CD8-positive, alpha-beta T cell (primary cell): ENCODE measurements at regions of chr3 and their contacts with region 1.

Region 1: GRCh38 chr3:57169872-57170623 is 4.9 kb upstream of the IL17RD start:
- DNase-seq: peak; percentile 22 to 77 (median 62)
- ATAC-seq: peak; percentile 78
- H3K4me3 ChIP-seq: peak overlapping the region; percentile 39 to 54
- H3K4me3 Mint-ChIP-seq: peak overlapping the region; percentile 46
- H3K27ac ChIP-seq: no peak overlapping the region
- H3K27ac Mint-ChIP-seq: no peak overlapping the region
- H3K4me1 ChIP-seq: peaks cover 6% of the 10 kb centered on the region
- H3K4me1 Mint-ChIP-seq: peaks cover 10% of the 10 kb centered on the region
- H3K27me3 ChIP-seq: peaks cover 6 to 7% of the 10 kb centered on the region in 2 experiments
- H3K27me3 Mint-ChIP-seq: peaks cover 48% of the 10 kb centered on the region
- CTCF ChIP-seq: peak; percentile 85

Region 2: GRCh38 chr3:57141719-57142410 is 28.2 kb before region 1 on chr3:
- CTCF ChIA-PET with region 1: interaction called, 10 read pairs
- POLR2A ChIA-PET with region 1: no interaction called
- intact Hi-C with region 1: no loop called
- DNase-seq: no peak
- ATAC-seq: no peak
- H3K4me3 ChIP-seq: no peak overlapping the region
- H3K4me3 Mint-ChIP-seq: no peak overlapping the region
- H3K27ac ChIP-seq: no peak overlapping the region
- H3K27ac Mint-ChIP-seq: no peak overlapping the region
- H3K4me1 ChIP-seq: no peaks in the 10 kb centered on the region
- H3K4me1 Mint-ChIP-seq: no peaks in the 10 kb centered on the region
- H3K27me3 ChIP-seq: no peaks in the 10 kb centered on the region
- H3K27me3 Mint-ChIP-seq: peaks cover 26% of the 10 kb centered on the region
- CTCF ChIP-seq: no peak

Region 3: GRCh38 chr3:57227204-57227929 is 57.3 kb after region 1 on chr3 and contains the start of gene APPL1:
- CTCF ChIA-PET with region 1: interaction called, 3 read pairs
- POLR2A ChIA-PET with region 1: no interaction called
- intact Hi-C with region 1: loop called in 1 of 2 experiments (anchors 1 kb)
- DNase-seq: peak; percentile 68 to 93 (median 87)
- ATAC-seq: peak; percentile 89
- H3K4me3 ChIP-seq: peak within 1 kb of the TSS; percentile 82 to 91
- H3K4me3 Mint-ChIP-seq: peak within 1 kb of the TSS; percentile 93
- H3K27ac ChIP-seq: peak within 1 kb of the TSS; percentile 48 to 68
- H3K27ac Mint-ChIP-seq: peak within 1 kb of the TSS; percentile 89
- H3K4me1 ChIP-seq: peaks cover 11% of the 10 kb centered on the region
- H3K4me1 Mint-ChIP-seq: peaks cover 30% of the 10 kb centered on the region
- H3K27me3 ChIP-seq: no peaks in the 10 kb centered on the region
- H3K27me3 Mint-ChIP-seq: no peaks in the 10 kb centered on the region
- CTCF ChIP-seq: no peak
- total RNA-seq, gene APPL1: 19.3 to 23.4 TPM

Region 4: DNA sequence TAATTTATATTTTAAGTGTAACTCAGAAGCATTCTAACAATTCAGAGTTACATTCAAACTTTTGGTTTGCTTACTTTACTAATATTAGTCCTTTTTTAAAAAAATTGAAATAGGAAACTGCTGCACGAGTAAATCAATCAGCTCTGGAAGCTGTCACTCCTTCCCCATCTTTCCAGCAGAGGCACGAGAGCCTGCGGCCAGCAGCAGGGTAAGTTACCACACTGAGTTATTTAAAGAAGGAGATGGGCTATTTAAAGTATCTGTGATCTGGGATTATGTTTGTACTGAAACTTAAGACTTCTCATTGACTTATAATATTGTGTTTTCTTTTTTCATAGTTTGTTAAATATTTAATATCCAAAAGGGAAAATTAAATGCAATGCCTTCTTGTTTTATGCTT is 86.8 kb after region 1 on chr3:
- CTCF ChIA-PET with region 1: no interaction called
- POLR2A ChIA-PET with region 1: no interaction called
- intact Hi-C with region 1: loop called in 1 of 2 experiments (anchors 5 kb)
- DNase-seq: no peak
- ATAC-seq: no peak
- H3K4me3 ChIP-seq: no peak overlapping the region
- H3K4me3 Mint-ChIP-seq: no peak overlapping the region
- H3K27ac ChIP-seq: no peak overlapping the region
- H3K27ac Mint-ChIP-seq: peak overlapping the region; percentile 3
- H3K4me1 ChIP-seq: no peaks in the 10 kb centered on the region
- H3K4me1 Mint-ChIP-seq: no peaks in the 10 kb centered on the region
- H3K27me3 ChIP-seq: no peaks in the 10 kb centered on the region
- H3K27me3 Mint-ChIP-seq: no peaks in the 10 kb centered on the region
- CTCF ChIP-seq: no peak

Region 5: DNA sequence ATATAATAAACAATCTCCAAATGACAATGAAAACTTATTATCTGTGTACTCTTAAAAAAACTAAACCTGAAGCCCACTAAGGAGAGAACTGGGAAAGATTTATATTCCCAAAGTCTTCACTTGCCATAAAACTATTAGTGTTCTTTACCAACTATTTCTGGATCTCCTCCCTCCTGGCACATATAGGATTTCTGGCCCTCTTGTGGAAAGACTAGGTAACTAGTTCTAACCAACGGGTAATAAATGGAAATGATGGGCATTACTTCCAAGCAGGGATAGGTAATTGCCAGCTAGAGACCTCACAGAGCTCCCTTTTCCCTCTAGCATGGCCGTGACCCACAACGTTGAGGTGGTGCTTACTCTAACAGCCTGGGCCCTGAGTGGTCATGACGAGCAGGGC is 264.0 kb after region 1 on chr3:
- CTCF ChIA-PET with region 1: interaction called, 3 read pairs
- POLR2A ChIA-PET with region 1: no interaction called
- intact Hi-C with region 1: loop called in 1 of 2 experiments (anchors 10 kb)
- DNase-seq: peak in 1 of 9 experiments; percentile 7
- ATAC-seq: no peak
- H3K4me3 ChIP-seq: no peak overlapping the region
- H3K4me3 Mint-ChIP-seq: no peak overlapping the region
- H3K27ac ChIP-seq: no peak overlapping the region
- H3K27ac Mint-ChIP-seq: no peak overlapping the region
- H3K4me1 ChIP-seq: no peaks in the 10 kb centered on the region
- H3K4me1 Mint-ChIP-seq: no peaks in the 10 kb centered on the region
- H3K27me3 ChIP-seq: no peaks in the 10 kb centered on the region
- H3K27me3 Mint-ChIP-seq: peaks cover 3% of the 10 kb centered on the region
- CTCF ChIP-seq: no peak

Region 6: GRCh38 chr3:57555738-57556458 is 385.9 kb after region 1 on chr3 and contains the start of gene PDE12:
- CTCF ChIA-PET with region 1: no interaction called
- POLR2A ChIA-PET with region 1: no interaction called
- intact Hi-C with region 1: loop called in 1 of 2 experiments (anchors 10 kb)
- DNase-seq: peak; percentile 66 to 91 (median 81)
- ATAC-seq: peak; percentile 69
- H3K4me3 ChIP-seq: peak within 1 kb of the TSS; percentile 77 to 96
- H3K4me3 Mint-ChIP-seq: peak within 1 kb of the TSS; percentile 88
- H3K27ac ChIP-seq: peak within 1 kb of the TSS; percentile 87 to 98
- H3K27ac Mint-ChIP-seq: peak within 1 kb of the TSS; percentile 99
- H3K4me1 ChIP-seq: peaks cover 31% of the 10 kb centered on the region
- H3K4me1 Mint-ChIP-seq: peaks cover 40% of the 10 kb centered on the region
- H3K27me3 ChIP-seq: no peaks in the 10 kb centered on the region
- H3K27me3 Mint-ChIP-seq: no peaks in the 10 kb centered on the region
- CTCF ChIP-seq: no peak
- total RNA-seq, gene PDE12: 44.8 to 45.9 TPM

Region 7: DNA sequence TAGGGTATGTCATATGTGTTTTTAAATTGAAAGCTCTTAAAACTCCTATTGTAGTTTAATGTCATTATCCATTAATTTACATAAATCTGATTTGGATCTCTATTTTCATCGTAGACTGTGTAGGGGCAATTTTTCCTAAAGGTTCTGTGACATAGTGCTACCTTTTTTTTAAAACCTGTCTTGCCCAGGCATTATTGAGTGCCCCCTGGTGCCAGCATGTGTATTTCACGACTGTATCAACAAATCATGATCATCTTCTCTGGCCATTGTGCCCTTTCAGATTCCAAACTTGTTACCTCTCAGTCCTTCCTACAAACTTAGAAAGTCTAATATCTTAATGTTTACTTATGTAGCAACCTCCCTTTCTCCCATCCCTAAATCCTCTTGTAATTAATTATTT is 740.9 kb after region 1 on chr3:
- CTCF ChIA-PET with region 1: interaction called, 4 read pairs
- POLR2A ChIA-PET with region 1: no interaction called
- intact Hi-C with region 1: loop called (anchors 2 to 5 kb)
- DNase-seq: peak in 6 of 9 experiments; percentile 3 to 53 (median 26)
- ATAC-seq: no peak
- H3K4me3 ChIP-seq: no peak overlapping the region
- H3K4me3 Mint-ChIP-seq: no peak overlapping the region
- H3K27ac ChIP-seq: no peak overlapping the region
- H3K27ac Mint-ChIP-seq: no peak overlapping the region
- H3K4me1 ChIP-seq: no peaks in the 10 kb centered on the region
- H3K4me1 Mint-ChIP-seq: no peaks in the 10 kb centered on the region
- H3K27me3 ChIP-seq: no peaks in the 10 kb centered on the region
- H3K27me3 Mint-ChIP-seq: no peaks in the 10 kb centered on the region
- CTCF ChIP-seq: no peak